AG04449 (cell line): ENCODE measurements at regions of chr7 and their contacts with region 1.

Region 1: DNA sequence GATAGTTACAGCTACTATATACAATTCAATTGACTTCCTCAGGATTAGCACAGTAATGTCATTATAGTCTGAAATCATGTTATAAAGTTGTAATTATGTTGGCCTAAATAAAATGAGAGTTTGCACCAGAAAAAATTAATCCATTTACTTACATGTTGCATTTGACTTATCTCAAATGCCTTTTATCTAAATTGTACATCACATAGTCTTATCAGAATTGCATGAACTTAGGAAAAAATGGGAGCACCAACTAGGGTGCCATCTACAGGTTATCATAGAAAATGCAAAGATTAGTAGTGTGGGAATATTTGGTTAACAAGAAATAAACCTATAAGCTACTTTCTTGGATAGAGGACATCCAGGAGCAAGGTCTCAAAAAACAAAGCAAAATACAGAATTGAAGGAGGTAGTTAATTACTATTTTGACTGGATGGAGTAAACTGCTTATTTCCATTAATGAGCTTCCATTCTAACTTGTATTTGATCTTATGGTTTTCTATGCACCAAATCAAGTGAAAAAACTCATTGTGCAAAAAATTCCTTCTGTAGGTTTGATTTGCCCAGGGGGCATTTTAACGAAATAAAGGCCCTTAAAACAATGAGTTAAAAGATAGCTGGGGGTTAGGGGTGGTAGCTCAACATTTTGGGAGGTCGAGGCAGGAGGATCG is 60.0 kb upstream of the ORC5 start:
- DNase-seq: no peak
- H3K4me3 ChIP-seq: no peak overlapping the region
- CTCF ChIP-seq: peak; percentile 44

Region 2: GRCh38 chr7:104240401-104240800 is 27.4 kb before region 1 on chr7:
- CTCF ChIA-PET with region 1: interaction called, 15 read pairs
- POLR2A ChIA-PET with region 1: no interaction called
- DNase-seq: no peak
- H3K4me3 ChIP-seq: no peak overlapping the region
- CTCF ChIP-seq: no peak

Region 3: DNA sequence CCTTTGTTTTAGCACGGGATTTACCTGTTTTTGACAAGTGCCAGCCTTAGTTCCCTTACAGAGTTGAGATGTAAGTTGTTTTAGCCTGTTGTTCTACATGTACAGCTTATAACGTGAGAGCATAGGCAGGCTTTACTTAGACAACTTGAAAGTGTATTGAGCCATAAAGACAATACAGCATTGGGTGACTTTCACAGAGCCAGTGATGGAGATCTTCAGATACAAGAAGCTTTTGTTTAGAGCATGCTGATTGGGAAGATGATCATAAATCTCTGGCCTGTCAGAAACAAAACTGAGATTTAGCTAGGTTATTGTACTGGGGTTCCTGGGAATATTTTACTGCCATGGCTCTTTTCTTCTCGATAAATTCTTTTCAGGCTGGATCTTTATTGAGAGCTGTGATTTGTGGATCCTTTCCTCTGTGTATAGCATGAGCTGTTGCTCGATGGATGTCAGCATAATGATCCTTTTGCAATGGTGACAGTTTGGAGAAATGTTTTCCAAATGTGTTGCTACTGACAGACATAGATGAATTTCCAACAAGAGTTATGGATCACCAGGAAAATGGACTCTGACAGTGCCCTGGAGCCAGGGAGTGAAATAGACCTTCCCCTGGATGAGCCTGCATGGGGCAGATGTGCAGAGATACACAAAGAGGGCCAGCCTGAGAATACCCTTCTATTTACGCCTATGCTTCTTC is 90.8 kb after region 1 on chr7:
- CTCF ChIA-PET with region 1: no interaction called
- POLR2A ChIA-PET with region 1: no interaction called
- DNase-seq: no peak
- H3K4me3 ChIP-seq: no peak overlapping the region
- CTCF ChIP-seq: no peak

Region 4: DNA sequence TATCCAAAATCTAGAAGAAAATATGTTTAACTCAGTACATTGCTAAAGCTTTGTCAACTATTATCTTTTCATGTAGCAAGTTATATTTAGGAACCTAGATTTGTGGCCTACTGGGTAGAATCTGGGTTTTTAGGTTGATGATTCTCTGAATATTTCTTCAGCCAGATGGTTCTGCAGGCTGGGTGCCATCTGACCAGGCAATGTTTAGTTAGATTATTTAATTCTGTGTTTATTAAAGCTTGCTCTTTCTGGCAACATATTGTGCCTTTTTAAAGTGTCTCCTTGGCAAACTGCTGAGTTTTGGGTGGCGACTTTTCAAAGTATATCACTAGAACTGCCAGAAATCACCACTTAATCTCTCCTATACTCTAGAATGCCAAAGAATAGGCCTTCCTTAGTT is 174.6 kb after region 1 on chr7:
- CTCF ChIA-PET with region 1: no interaction called
- POLR2A ChIA-PET with region 1: no interaction called
- DNase-seq: no peak
- H3K4me3 ChIP-seq: no peak overlapping the region
- CTCF ChIP-seq: no peak

Region 5: DNA sequence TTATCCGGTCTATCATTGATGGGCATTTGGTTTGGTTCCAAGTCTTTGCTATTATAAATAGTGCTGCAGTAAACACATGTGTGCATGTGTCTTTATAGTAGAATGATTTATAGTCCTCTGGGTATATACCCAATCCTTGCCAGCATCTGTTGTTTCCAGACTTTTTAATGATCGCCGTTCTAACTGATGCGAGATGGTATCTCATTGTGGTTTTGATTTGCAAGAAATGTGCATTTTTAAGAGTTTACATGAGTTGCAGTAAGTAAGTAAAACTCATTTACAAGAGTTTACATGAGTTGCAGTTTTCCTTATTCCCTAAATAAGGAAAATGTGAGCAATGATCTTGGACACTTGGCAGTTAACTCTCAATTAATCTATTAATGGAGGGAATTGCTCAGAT is 372.7 kb after region 1 on chr7:
- CTCF ChIA-PET with region 1: no interaction called
- POLR2A ChIA-PET with region 1: no interaction called
- DNase-seq: no peak
- H3K4me3 ChIP-seq: no peak overlapping the region
- CTCF ChIP-seq: no peak